Activated CD8-positive, alpha-beta T cell treated with anti-CD3 and anti-CD28 coated beads, Interleukin-2, amount 10 ng/mL, durations not matched to agents 7 days and 5 days (primary cell): ENCODE measurements at regions of chr19 and their contacts with region 1.

Region 1: GRCh38 chr19:5031231-5032100 is 62.6 kb downstream of the KDM4B start:
- DNase-seq: peak; percentile 85
- ATAC-seq: peak; percentile 88
- H3K4me3 Mint-ChIP-seq: no peak overlapping the region
- H3K27ac Mint-ChIP-seq: no peak overlapping the region
- H3K4me1 Mint-ChIP-seq: peaks cover 4% of the 10 kb centered on the region
- H3K27me3 Mint-ChIP-seq: no peaks in the 10 kb centered on the region

Region 2: GRCh38 chr19:4873930-4874329 is 157.5 kb before region 1 on chr19:
- CTCF ChIA-PET with region 1: interaction called, 15 read pairs
- POLR2A ChIA-PET with region 1: interaction called, 4 read pairs
- DNase-seq: no peak
- ATAC-seq: no peak
- H3K4me3 Mint-ChIP-seq: no peak overlapping the region
- H3K27ac Mint-ChIP-seq: no peak overlapping the region
- H3K4me1 Mint-ChIP-seq: peaks cover 24% of the 10 kb centered on the region
- H3K27me3 Mint-ChIP-seq: peaks cover 8% of the 10 kb centered on the region

Region 3: GRCh38 chr19:5001615-5002014 is 29.9 kb before region 1 on chr19:
- CTCF ChIA-PET with region 1: interaction called, 18 read pairs
- POLR2A ChIA-PET with region 1: no interaction called
- DNase-seq: peak; percentile 49
- ATAC-seq: peak; percentile 71
- H3K4me3 Mint-ChIP-seq: no peak overlapping the region
- H3K27ac Mint-ChIP-seq: no peak overlapping the region
- H3K4me1 Mint-ChIP-seq: no peaks in the 10 kb centered on the region
- H3K27me3 Mint-ChIP-seq: no peaks in the 10 kb centered on the region

Region 4: DNA sequence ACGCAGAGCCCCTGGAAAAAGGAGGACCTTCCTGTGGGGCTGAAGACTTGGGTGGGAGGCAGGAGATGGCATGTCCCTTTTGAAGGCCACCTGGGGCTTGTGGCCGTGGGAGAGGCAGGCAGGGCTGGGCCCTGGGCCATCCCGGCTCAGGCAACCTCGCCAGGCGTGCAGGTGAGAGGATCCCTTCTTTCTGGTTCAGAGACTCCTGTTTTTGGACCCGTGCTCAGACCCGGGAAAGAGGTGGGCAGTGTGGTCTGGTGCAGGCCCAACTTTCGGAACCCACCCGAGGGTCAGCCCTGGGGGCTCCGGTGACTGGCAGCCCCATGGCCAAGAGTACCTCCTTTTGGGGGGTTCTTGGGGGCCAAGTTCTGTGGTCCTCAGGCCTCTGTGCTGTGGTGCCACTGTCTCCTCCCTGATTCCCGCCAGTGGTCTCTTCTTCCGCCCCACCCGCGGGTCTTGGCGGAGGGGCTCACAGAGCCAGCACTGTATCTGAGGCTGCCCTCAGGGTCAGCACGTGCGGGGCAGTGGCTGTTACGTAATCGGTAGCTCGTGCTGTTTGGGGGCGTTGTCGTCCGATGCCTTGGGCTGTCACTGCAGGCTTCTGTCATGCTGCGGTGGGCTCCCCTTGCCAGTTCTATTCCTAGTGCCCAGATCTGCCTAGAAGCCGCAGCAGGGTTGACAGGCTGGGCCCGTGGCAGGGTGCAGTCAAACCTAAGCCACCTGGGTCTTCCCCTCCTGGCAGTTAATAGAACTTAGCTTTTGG is 19.8 kb before region 1 on chr19:
- CTCF ChIA-PET with region 1: no interaction called
- POLR2A ChIA-PET with region 1: no interaction called
- DNase-seq: no peak
- ATAC-seq: no peak
- H3K4me3 Mint-ChIP-seq: no peak overlapping the region
- H3K27ac Mint-ChIP-seq: no peak overlapping the region
- H3K4me1 Mint-ChIP-seq: no peaks in the 10 kb centered on the region
- H3K27me3 Mint-ChIP-seq: no peaks in the 10 kb centered on the region

Region 5: DNA sequence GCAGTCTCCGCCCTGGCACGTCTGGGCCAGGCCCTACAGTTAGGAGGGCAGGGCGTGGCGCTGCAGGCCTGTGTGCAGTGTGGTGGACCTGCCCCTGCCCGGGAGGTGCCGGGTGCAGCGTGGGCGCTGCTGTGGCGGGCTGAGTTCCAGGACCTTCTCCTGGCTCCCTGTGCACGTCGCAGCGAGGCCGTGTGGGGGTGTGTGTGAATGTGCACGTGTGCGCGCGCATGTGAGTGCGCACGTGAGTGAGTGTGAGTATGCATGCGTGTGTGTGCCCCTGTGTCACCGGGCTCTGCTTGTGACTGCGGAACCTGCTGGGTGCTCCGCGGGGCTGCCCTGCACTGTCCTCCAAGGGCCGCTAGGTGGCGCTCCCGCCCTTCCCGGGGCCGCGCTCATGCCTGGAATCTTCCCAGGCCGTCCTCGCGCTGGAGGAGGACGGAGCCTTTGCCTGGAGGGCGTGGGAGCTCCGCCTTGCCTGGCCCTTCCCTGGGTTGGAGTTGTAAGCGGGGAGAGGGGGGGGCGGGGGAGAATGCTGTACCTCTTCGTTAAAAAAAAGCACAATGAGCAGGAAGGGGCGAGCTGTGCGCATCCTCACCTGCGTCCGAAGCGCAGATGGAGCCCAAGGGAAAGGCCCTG is 16.7 kb after region 1 on chr19:
- CTCF ChIA-PET with region 1: no interaction called
- POLR2A ChIA-PET with region 1: no interaction called
- DNase-seq: peak; percentile 71
- ATAC-seq: peak; percentile 82
- H3K4me3 Mint-ChIP-seq: no peak overlapping the region
- H3K27ac Mint-ChIP-seq: no peak overlapping the region
- H3K4me1 Mint-ChIP-seq: no peaks in the 10 kb centered on the region
- H3K27me3 Mint-ChIP-seq: no peaks in the 10 kb centered on the region

Region 6: GRCh38 chr19:5058813-5059529 is 27.5 kb after region 1 on chr19:
- CTCF ChIA-PET with region 1: no interaction called
- POLR2A ChIA-PET with region 1: no interaction called
- DNase-seq: no peak
- ATAC-seq: no peak
- H3K4me3 Mint-ChIP-seq: no peak overlapping the region
- H3K27ac Mint-ChIP-seq: no peak overlapping the region
- H3K4me1 Mint-ChIP-seq: no peaks in the 10 kb centered on the region
- H3K27me3 Mint-ChIP-seq: no peaks in the 10 kb centered on the region

Region 7: DNA sequence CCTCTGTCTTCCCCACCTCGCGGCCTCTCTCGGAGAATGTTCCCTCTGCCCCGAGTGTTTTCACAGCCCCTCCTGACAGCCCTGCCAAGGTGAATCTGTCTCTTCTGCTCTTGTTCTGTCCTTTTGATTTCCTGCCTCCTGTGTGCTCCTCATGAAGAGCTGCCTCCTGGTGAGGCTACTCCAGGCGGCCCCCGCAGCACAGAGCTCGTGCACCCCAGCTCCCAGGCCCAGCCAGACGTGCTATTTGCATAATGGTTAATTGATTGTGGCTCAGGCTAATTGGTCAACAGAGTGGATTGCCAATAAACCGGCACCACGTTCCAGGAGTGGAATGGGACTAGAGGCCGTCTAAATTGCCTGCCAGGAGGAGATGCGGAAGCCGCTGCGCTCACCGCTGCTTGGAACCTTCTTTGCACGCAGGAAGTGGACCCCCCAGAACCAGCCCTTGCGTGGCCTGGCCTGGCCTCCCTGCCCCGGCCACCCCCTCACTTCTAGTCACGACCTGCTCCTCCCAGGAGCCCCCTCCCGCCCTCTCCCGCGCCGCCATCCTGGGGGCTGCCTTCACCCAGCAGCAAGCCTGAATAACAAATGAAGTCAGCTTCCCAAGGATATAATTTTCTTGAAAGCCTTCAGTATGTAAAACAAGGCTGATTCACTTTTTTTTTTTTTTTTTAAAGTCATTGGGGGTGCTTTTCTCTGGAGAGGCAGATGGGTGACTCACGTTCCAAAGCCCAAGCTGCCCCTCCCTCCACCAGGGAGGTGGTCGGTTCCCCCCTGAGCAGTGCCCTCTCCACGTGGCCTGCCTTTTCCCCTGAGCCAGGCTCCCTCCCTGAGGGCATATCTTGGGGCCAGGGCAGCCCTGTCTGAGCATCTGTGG is 81.5 kb after region 1 on chr19:
- CTCF ChIA-PET with region 1: no interaction called
- POLR2A ChIA-PET with region 1: no interaction called
- DNase-seq: no peak
- ATAC-seq: no peak
- H3K4me3 Mint-ChIP-seq: no peak overlapping the region
- H3K27ac Mint-ChIP-seq: no peak overlapping the region
- H3K4me1 Mint-ChIP-seq: no peaks in the 10 kb centered on the region
- H3K27me3 Mint-ChIP-seq: no peaks in the 10 kb centered on the region